Posterior cingulate gyrus (tissue), 11 donors: ENCODE measurements at regions of chr17 and their contacts with region 1.

Region 1: GRCh38 chr17:65332375-65332774 is 195.2 kb downstream of the RGS9 start:
- DNase-seq: no peak

Region 2: DNA sequence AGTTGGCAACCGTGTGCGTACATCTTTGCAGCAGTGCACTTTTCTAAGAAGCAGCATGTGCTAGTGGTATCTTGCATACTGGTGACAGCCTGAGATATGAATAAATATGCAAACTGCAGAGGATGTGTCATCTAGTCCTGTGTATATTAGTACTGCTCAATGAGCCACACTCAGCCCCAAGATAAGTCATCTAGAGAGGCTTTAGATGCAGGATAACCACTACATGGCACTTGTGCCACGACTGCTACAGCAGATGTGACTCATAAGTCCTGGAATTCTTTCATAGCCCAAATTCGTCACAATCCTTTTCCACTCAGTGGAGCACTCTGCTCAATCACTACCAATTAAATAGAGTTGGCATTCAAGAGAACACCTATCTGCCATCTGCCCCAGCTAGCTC is 57.6 kb after region 1 on chr17:
- intact Hi-C with region 1: loop called (anchors 10 kb)
- DNase-seq: no peak